Activated CD4-positive, alpha-beta T cell treated with anti-CD3 and anti-CD28 coated beads, Interleukin-2, amount 10 ng/mL, durations not matched to agents 7 days and 5 days (primary cell): ENCODE measurements at regions of chr2 and their contacts with region 1.

Region 1: GRCh38 chr2:39227628-39228412 is 15.9 kb downstream of the CDKL4 start:
- DNase-seq: peak; percentile 86
- H3K4me3 Mint-ChIP-seq: peak overlapping the region; percentile 69
- H3K27ac Mint-ChIP-seq: peak overlapping the region; percentile 89
- H3K4me1 Mint-ChIP-seq: peaks cover 55% of the 10 kb centered on the region
- H3K27me3 Mint-ChIP-seq: no peaks in the 10 kb centered on the region

Region 2: GRCh38 chr2:38947240-38948239 is 280.3 kb before region 1 on chr2:
- CTCF ChIA-PET with region 1: interaction called, 63 read pairs
- POLR2A ChIA-PET with region 1: no interaction called
- DNase-seq: peak; percentile 83
- H3K4me3 Mint-ChIP-seq: no peak overlapping the region
- H3K27ac Mint-ChIP-seq: no peak overlapping the region
- H3K4me1 Mint-ChIP-seq: no peaks in the 10 kb centered on the region
- H3K27me3 Mint-ChIP-seq: no peaks in the 10 kb centered on the region

Region 3: GRCh38 chr2:38954986-38955385 is 272.8 kb before region 1 on chr2:
- CTCF ChIA-PET with region 1: interaction called, 63 read pairs
- POLR2A ChIA-PET with region 1: no interaction called
- DNase-seq: no peak
- H3K4me3 Mint-ChIP-seq: no peak overlapping the region
- H3K27ac Mint-ChIP-seq: no peak overlapping the region
- H3K4me1 Mint-ChIP-seq: peaks cover 2% of the 10 kb centered on the region
- H3K27me3 Mint-ChIP-seq: peaks cover 19% of the 10 kb centered on the region

Region 4: GRCh38 chr2:39107156-39107555 is 120.7 kb before region 1 on chr2:
- CTCF ChIA-PET with region 1: interaction called, 12 read pairs
- POLR2A ChIA-PET with region 1: no interaction called
- DNase-seq: no peak
- H3K4me3 Mint-ChIP-seq: no peak overlapping the region
- H3K27ac Mint-ChIP-seq: peak overlapping the region; percentile 37
- H3K4me1 Mint-ChIP-seq: peaks cover 73% of the 10 kb centered on the region
- H3K27me3 Mint-ChIP-seq: no peaks in the 10 kb centered on the region

Region 5: GRCh38 chr2:39124000-39124745 is 103.6 kb before region 1 on chr2:
- CTCF ChIA-PET with region 1: interaction called, 49 read pairs
- POLR2A ChIA-PET with region 1: interaction called, 8 read pairs
- DNase-seq: peak; percentile 97
- H3K4me3 Mint-ChIP-seq: peak overlapping the region; percentile 95
- H3K27ac Mint-ChIP-seq: peak overlapping the region; percentile 97
- H3K4me1 Mint-ChIP-seq: peaks cover 59% of the 10 kb centered on the region
- H3K27me3 Mint-ChIP-seq: no peaks in the 10 kb centered on the region

Region 6: GRCh38 chr2:39216346-39217191 is 11.3 kb before region 1 on chr2:
- CTCF ChIA-PET with region 1: interaction called, 16 read pairs
- POLR2A ChIA-PET with region 1: interaction called, 4 read pairs
- DNase-seq: peak; percentile 95
- H3K4me3 Mint-ChIP-seq: peak overlapping the region; percentile 36
- H3K27ac Mint-ChIP-seq: peak overlapping the region; percentile 97
- H3K4me1 Mint-ChIP-seq: peaks cover 78% of the 10 kb centered on the region
- H3K27me3 Mint-ChIP-seq: no peaks in the 10 kb centered on the region

Region 7: DNA sequence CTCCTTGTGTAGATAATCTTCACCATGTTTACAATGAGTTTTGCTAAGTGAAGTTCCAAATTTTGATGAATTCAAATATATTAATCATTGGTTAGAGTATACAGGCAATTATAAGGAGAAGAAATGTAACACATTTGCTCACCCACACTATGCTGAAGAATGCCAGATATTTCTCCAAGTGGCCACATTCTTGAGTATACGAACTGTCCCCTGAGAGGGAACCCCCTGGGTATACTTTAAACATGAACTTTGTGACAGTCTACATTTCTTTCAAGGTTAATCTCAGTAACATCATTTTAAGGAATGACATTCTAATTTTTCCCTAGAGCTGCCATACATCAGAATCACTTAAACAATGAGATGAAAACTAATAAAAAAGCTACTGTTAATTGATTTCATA is 55.7 kb after region 1 on chr2:
- CTCF ChIA-PET with region 1: no interaction called
- POLR2A ChIA-PET with region 1: no interaction called
- DNase-seq: no peak
- H3K4me3 Mint-ChIP-seq: no peak overlapping the region
- H3K27ac Mint-ChIP-seq: no peak overlapping the region
- H3K4me1 Mint-ChIP-seq: no peaks in the 10 kb centered on the region
- H3K27me3 Mint-ChIP-seq: no peaks in the 10 kb centered on the region

Region 8: GRCh38 chr2:39350658-39351057 is 122.8 kb after region 1 on chr2:
- CTCF ChIA-PET with region 1: no interaction called
- POLR2A ChIA-PET with region 1: no interaction called
- DNase-seq: no peak
- H3K4me3 Mint-ChIP-seq: no peak overlapping the region
- H3K27ac Mint-ChIP-seq: no peak overlapping the region
- H3K4me1 Mint-ChIP-seq: no peaks in the 10 kb centered on the region
- H3K27me3 Mint-ChIP-seq: no peaks in the 10 kb centered on the region

Region 9: GRCh38 chr2:39603436-39603835 is 375.6 kb after region 1 on chr2:
- CTCF ChIA-PET with region 1: no interaction called
- POLR2A ChIA-PET with region 1: no interaction called
- DNase-seq: no peak
- H3K4me3 Mint-ChIP-seq: no peak overlapping the region
- H3K27ac Mint-ChIP-seq: no peak overlapping the region
- H3K4me1 Mint-ChIP-seq: no peaks in the 10 kb centered on the region
- H3K27me3 Mint-ChIP-seq: no peaks in the 10 kb centered on the region